ENCODE measurements at regions of chr17 and their contacts with region 1.

Region 1: GRCh38 chr17:67980456-67980855 is 15.8 kb downstream of the C17orf58 start:
- DNase-seq: no peak
- H3K4me3 ChIP-seq: no peak overlapping the region
- H3K27ac ChIP-seq: no peak overlapping the region
- H3K4me1 ChIP-seq: no peaks in the 10 kb centered on the region
- H3K27me3 ChIP-seq: no peaks in the 10 kb centered on the region
- CTCF ChIP-seq: no peak

Region 2: GRCh38 chr17:67942810-67943209 is 37.6 kb before region 1 on chr17:
- CTCF ChIA-PET with region 1: no interaction called
- POLR2A ChIA-PET with region 1: no interaction called
- intact Hi-C with region 1: no loop called
- DNase-seq: peak; percentile 15
- H3K4me3 ChIP-seq: no peak overlapping the region
- H3K27ac ChIP-seq: no peak overlapping the region
- H3K4me1 ChIP-seq: peaks cover 22% of the 10 kb centered on the region
- H3K27me3 ChIP-seq: no peaks in the 10 kb centered on the region
- CTCF ChIP-seq: peak; percentile 76

Region 3: GRCh38 chr17:68011199-68011665 is 30.8 kb after region 1 on chr17:
- CTCF ChIA-PET with region 1: no interaction called
- POLR2A ChIA-PET with region 1: interaction called, 11 read pairs
- intact Hi-C with region 1: no loop called
- DNase-seq: no peak
- H3K4me3 ChIP-seq: no peak overlapping the region
- H3K27ac ChIP-seq: no peak overlapping the region
- H3K4me1 ChIP-seq: no peaks in the 10 kb centered on the region
- H3K27me3 ChIP-seq: no peaks in the 10 kb centered on the region
- CTCF ChIP-seq: peak; percentile 83